ENCODE measurements at regions of chr9 and their contacts with region 1.

Region 1: DNA sequence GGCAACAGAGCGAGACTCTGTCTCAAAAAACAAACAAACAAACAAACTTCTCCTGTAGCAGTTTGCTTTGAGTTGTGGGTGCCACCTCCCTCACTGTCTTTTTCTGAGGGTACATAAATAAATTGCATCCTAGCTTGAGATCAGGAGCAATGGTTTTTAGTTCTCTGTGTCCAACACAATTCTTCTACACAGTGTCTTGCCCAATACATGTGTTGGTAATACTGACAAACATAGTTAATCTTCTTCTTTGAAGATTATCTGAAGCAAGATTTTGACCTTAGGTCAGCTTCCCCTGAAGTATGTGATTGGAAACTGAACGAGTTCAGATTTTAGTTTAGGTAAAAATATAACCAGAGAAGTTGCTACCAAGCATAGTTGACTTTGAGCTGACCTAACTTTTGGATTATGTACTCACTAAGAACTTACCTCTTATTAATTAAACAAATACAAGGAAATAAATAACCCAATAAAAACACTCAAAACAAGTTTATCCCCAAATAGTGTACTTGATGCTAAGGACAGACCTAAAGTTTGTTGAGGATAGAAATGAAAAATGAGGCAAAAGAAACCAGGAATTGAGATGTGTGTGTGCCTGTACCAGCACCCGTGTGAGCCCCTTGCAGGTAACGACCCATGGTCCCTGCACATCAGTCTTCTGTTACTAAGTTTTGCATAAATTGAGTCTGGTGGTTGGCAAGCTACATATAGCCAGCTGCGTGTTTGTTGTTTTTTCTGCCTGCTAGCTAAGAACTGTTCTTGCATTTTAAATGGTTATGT is 16.2 kb downstream of the TJP2 start:
- DNase-seq: no peak
- H3K4me3 ChIP-seq: no peak overlapping the region
- H3K27ac ChIP-seq: no peak overlapping the region
- H3K4me1 ChIP-seq: peaks cover 7 to 77% (median 31%) of the 10 kb centered on the region in 4 donors
- H3K27me3 ChIP-seq: no peaks in the 10 kb centered on the region
- CTCF ChIP-seq: no peak

Region 2: DNA sequence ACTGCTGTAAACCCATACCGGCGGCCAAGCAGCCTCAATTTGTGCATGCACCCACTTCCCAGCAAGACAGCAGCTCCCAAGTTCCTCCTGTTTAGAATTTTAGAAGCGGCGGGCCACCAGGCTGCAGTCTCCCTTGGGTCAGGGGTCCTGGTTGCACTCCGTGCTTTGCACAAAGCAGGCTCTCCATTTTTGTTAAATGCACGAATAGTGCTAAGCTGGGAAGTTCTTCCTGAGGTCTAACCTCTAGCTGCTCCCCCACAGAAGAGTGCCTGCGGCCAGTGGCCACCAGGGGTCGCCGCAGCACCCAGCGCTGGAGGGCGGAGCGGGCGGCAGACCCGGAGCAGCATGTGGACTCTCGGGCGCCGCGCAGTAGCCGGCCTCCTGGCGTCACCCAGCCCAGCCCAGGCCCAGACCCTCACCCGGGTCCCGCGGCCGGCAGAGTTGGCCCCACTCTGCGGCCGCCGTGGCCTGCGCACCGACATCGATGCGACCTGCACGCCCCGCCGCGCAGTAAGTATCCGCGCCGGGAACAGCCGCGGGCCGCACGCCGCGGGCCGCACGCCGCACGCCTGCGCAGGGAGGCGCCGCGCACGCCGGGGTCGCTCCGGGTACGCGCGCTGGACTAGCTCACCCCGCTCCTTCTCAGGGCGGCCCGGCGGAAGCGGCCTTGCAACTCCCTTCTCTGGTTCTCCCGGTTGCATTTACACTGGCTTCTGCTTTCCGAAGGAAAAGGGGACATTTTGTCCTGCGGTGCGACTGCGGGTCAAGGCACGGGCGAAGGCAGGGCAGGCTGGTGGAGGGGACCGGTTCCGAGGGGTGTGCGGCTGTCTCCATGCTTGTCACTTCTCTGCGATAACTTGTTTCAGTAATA is 154.6 kb before region 1 on chr9 and contains the start of gene FXN:
- intact Hi-C with region 1: loop called (anchors 5 kb)
- DNase-seq: peak; percentile 80 to 89
- H3K4me3 ChIP-seq: peak within 1 kb of the TSS; percentile 59 to 90
- H3K27ac ChIP-seq: peak within 1 kb of the TSS; percentile 70 to 73
- H3K4me1 ChIP-seq: peaks cover 0 to 11% (median 5%) of the 10 kb centered on the region in 4 donors
- H3K27me3 ChIP-seq: no peaks in the 10 kb centered on the region
- CTCF ChIP-seq: peak; percentile 92 to 99

Region 3: GRCh38 chr9:69056191-69056815 is 134.0 kb before region 1 on chr9:
- intact Hi-C with region 1: loop called (anchors 2 kb)
- DNase-seq: no peak
- H3K4me3 ChIP-seq: no peak overlapping the region
- H3K27ac ChIP-seq: no peak overlapping the region
- H3K4me1 ChIP-seq: peaks cover 0 to 17% (median 3%) of the 10 kb centered on the region in 4 donors
- H3K27me3 ChIP-seq: no peaks in the 10 kb centered on the region
- CTCF ChIP-seq: no peak

Region 4: DNA sequence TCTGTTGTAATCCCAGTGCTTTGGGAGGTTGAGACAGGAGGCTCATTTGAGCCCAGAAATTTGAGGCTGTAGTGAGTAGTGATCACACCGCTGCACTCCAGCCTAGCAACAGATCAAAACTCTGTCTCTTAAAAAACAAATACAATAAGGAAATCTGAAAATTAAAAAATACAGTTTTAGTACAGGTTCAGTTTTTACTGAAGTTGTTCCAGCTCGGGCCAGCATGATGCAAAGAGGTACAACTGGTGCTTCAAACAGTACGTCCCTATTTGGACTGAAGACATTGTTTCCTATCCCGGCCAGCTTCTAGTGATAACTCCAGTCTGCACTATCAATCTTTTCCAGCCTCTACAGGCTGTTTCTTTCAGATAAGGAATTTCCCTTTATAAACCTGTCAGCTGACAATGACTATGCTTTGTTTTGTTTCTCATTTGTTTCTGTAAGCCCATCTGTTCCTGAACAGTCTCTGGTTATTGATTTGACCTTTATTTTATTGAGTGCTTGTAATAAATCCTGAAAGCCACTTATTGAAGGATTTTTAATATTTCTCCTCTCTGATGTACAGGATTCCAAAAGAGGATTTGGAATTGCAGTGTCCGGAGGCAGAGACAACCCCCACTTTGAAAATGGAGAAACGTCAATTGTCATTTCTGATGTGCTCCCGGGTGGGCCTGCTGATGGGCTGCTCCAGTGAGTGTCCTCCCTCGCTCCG is 25.7 kb after region 1 on chr9:
- intact Hi-C with region 1: no loop called
- DNase-seq: no peak
- H3K4me3 ChIP-seq: no peak overlapping the region
- H3K27ac ChIP-seq: no peak overlapping the region
- H3K4me1 ChIP-seq: peaks cover 0 to 21% (median 4%) of the 10 kb centered on the region in 4 donors
- H3K27me3 ChIP-seq: no peaks in the 10 kb centered on the region
- CTCF ChIP-seq: no peak

Measured in tibial artery (tissue), 4 donors.